ENCODE measurements at regions of chr5 and their contacts with region 1.

Region 1: GRCh38 chr5:431001-431710 is 11.8 kb upstream of the EXOC3 start:
- DNase-seq: peak in 1 of 2 experiments; percentile 78
- H3K4me3 ChIP-seq: no peak overlapping the region
- H3K27ac ChIP-seq: no peak overlapping the region
- H3K4me1 ChIP-seq: no peaks in the 10 kb centered on the region
- H3K27me3 ChIP-seq: no peaks in the 10 kb centered on the region
- CTCF ChIP-seq: peak; percentile 90

Region 2: GRCh38 chr5:42243-42642 is 388.9 kb before region 1 on chr5:
- CTCF ChIA-PET with region 1: no interaction called
- POLR2A ChIA-PET with region 1: no interaction called
- intact Hi-C with region 1: loop called (anchors 1 kb)
- DNase-seq: peak in 1 of 2 experiments; percentile 63
- H3K4me3 ChIP-seq: no peak overlapping the region
- H3K27ac ChIP-seq: no peak overlapping the region
- H3K4me1 ChIP-seq: peaks cover 4% of the 10 kb centered on the region; the same call in 1 of the 2 replicates
- H3K27me3 ChIP-seq: peaks cover 79% of the 10 kb centered on the region
- CTCF ChIP-seq: peak; percentile 66

Region 3: GRCh38 chr5:188488-189481 is 242.4 kb before region 1 on chr5:
- CTCF ChIA-PET with region 1: interaction called, 4 read pairs
- POLR2A ChIA-PET with region 1: interaction called, 4 read pairs
- intact Hi-C with region 1: loop called (anchors 2 kb)
- DNase-seq: peak; percentile 76 to 98
- H3K4me3 ChIP-seq: no peak overlapping the region
- H3K27ac ChIP-seq: no peak overlapping the region
- H3K4me1 ChIP-seq: no peaks in the 10 kb centered on the region
- H3K27me3 ChIP-seq: peaks cover 76% of the 10 kb centered on the region
- CTCF ChIP-seq: peak; percentile 100

Region 4: DNA sequence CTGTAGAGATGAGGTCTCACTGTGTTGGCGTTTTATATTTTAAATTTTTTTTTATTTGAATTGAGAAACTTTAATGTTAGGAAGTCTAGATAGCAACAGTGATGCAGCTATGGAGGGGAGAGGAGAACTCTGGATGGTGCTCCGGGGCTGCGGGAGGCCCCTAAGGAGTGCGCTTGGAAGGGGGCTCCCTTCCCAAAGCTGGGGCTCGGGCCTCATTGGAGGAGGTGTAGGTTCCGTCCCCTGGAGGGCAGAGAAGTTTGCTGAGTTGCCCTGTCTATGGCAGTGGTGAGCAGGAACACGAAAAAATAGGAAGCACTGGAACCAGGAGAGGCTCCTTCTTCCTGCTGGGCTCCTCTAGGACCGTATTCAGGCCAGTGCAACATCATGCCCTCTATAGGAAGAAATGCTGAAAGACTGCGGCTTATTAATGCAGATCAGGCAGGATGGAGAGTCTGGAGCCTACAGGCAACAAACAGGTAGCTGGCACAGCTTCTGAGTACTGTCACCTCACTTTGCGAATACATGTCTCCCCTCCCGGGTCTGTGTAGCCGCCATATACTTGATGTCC is 93.5 kb before region 1 on chr5:
- CTCF ChIA-PET with region 1: interaction called, 20 read pairs
- POLR2A ChIA-PET with region 1: no interaction called
- intact Hi-C with region 1: no loop called
- DNase-seq: no peak
- H3K4me3 ChIP-seq: no peak overlapping the region
- H3K27ac ChIP-seq: no peak overlapping the region
- H3K4me1 ChIP-seq: no peaks in the 10 kb centered on the region
- H3K27me3 ChIP-seq: no peaks in the 10 kb centered on the region
- CTCF ChIP-seq: peak; percentile 61

Region 5: DNA sequence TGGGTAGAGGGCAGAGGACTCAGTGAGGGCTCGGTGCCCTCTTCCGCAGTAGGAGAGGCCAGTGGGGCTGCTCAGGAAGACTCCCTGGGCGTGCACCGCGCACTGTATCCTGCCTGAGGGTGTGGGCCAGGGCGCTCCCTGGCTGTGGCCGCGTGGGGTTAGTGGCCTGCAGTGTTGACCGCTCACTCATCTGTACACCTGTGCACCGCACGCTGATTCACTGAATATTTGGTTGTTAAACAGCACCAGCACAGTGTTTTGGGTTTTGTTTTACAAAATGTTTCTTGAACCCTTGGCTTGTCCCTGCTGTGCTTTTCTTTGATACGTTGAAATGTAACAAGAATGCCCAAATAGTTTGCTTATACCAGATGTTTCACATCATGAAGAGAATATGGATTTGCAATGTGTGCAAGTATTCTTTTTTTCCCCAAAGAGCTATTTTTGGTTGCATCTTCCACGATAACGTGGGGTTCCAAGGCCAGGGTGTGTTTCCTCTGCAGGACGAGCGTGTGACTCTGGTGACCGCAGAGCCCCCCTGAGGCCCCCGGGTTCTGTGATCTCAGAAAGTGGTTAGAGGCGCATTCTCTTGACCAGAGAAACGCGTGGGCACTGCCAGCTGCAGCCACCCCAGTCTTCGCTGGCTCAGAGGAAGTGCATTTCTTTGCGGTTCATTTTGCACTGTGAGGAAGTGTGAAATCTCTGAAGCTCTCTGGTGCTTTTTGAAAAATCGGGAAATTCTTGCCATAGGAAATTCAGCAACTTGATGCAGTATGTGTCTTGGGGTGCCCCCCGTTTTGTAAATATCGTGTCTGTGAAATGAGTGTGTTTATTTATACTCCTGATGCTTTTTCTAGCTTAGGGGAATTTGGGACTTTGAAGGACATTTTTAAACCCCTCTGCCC is 62.7 kb before region 1 on chr5:
- CTCF ChIA-PET with region 1: interaction called, 7 read pairs
- POLR2A ChIA-PET with region 1: no interaction called
- intact Hi-C with region 1: loop called (anchors 5 kb)
- DNase-seq: no peak
- H3K4me3 ChIP-seq: no peak overlapping the region
- H3K27ac ChIP-seq: no peak overlapping the region
- H3K4me1 ChIP-seq: no peaks in the 10 kb centered on the region
- H3K27me3 ChIP-seq: no peaks in the 10 kb centered on the region
- CTCF ChIP-seq: no peak